Activated CD4-positive, alpha-beta T cell treated with anti-CD3 and anti-CD28 coated beads for 36 hours (primary cell): ENCODE measurements at regions of chr22 and their contacts with region 1.

Region 1: GRCh38 chr22:25990940-25991339 is 178.3 kb upstream of the SEZ6L start:
- DNase-seq: no peak
- ATAC-seq: no peak
- H3K4me3 Mint-ChIP-seq: no peak overlapping the region
- H3K27ac Mint-ChIP-seq: no peak overlapping the region
- H3K4me1 Mint-ChIP-seq: no peaks in the 10 kb centered on the region
- H3K27me3 Mint-ChIP-seq: peaks cover 2% of the 10 kb centered on the region

Region 2: GRCh38 chr22:25979968-25980367 is 11.0 kb before region 1 on chr22:
- CTCF ChIA-PET with region 1: no interaction called
- POLR2A ChIA-PET with region 1: no interaction called
- intact Hi-C with region 1: loop called in 1 of 2 experiments (anchors 1 kb)
- DNase-seq: no peak
- ATAC-seq: no peak
- H3K4me3 Mint-ChIP-seq: no peak overlapping the region
- H3K27ac Mint-ChIP-seq: no peak overlapping the region
- H3K4me1 Mint-ChIP-seq: no peaks in the 10 kb centered on the region
- H3K27me3 Mint-ChIP-seq: peaks cover 10% of the 10 kb centered on the region